ENCODE measurements at regions of chr13 and their contacts with region 1.

Region 1: DNA sequence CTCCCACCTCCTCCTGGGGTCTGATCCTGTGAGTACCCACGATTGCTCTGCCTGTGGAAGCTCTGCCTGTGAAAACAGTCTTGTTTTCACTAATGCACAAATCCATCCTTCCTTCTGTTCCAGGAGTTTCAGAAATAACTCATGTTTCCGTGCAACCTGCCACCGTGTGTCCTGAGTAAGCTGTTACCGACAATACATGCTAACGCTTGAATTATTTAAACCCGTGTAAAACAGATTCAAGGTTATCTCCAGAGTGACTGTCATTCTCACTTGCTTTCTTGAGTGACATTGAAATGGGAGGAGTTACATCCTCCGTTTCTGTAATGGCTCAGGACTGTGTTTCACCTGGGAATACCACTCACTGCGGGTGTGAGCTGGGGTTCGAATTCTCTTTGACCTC is 24.9 kb downstream of the GPR12 start:
- DNase-seq: no peak
- H3K4me3 ChIP-seq: no peak overlapping the region
- H3K27ac ChIP-seq: no peak overlapping the region
- H3K4me1 ChIP-seq: no peaks in the 10 kb centered on the region
- H3K27me3 ChIP-seq: no peaks in the 10 kb centered on the region
- CTCF ChIP-seq: no peak
- EP300 ChIP-seq: no peak
- POLR2A ChIP-seq: no peak

Region 2: DNA sequence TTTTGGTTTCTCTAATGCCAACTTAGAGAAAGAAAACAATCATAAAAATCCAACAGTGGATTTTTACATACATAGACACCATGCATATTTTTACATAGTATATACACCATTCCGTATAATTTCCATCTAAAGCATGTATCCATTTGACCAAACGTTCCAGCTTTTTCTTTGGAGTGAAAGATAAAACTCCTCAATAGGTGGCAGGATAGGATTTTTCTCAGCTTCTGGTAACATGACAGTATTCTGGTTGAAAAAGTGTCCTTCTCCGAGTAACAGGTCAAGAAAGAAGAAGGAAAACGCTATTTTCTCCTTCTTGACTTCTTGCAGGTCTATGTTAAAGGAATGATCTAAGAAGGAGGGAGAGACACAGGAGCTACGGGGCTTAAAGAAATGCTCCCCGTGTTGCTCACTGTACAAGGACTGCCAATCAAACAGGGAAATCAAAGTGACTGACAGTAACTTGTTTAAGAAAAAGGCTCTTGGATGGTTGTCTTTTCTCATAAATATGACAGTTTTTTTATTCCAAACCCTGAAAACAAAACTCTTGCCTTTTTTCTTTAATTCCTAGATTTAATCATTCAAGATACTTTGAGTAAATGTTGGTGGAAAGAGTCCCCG is 1747.7 kb after region 1 on chr13:
- in situ Hi-C with region 1: no loop called
- intact Hi-C with region 1: loop called (anchors 5 kb)
- DNase-seq: no peak
- H3K4me3 ChIP-seq: no peak overlapping the region
- H3K27ac ChIP-seq: no peak overlapping the region
- H3K4me1 ChIP-seq: no peaks in the 10 kb centered on the region
- H3K27me3 ChIP-seq: peaks cover 36% of the 10 kb centered on the region
- CTCF ChIP-seq: no peak
- EP300 ChIP-seq: no peak
- POLR2A ChIP-seq: no peak

Measured in transverse colon (tissue), 4 donors.